Calu3 (cell line): ENCODE measurements at regions of chr11 and their contacts with region 1.

Region 1: GRCh38 chr11:35404388-35404775 is 15.0 kb downstream of the SLC1A2 start:
- DNase-seq: peak; percentile 74
- H3K4me3 Mint-ChIP-seq: peak overlapping the region; percentile 48
- H3K27ac Mint-ChIP-seq: no peak overlapping the region
- H3K4me1 Mint-ChIP-seq: peaks cover 8% of the 10 kb centered on the region
- H3K27me3 Mint-ChIP-seq: peaks cover 4% of the 10 kb centered on the region
- CTCF ChIP-seq: peak; percentile 59

Region 2: GRCh38 chr11:35082321-35083182 is 321.8 kb before region 1 on chr11:
- CTCF ChIA-PET with region 1: no interaction called
- intact Hi-C with region 1: loop called (anchors 10 kb)
- DNase-seq: peak; percentile 58
- H3K4me3 Mint-ChIP-seq: peak overlapping the region; percentile 30
- H3K27ac Mint-ChIP-seq: peak overlapping the region; percentile 47
- H3K4me1 Mint-ChIP-seq: peaks cover 34% of the 10 kb centered on the region
- H3K27me3 Mint-ChIP-seq: no peaks in the 10 kb centered on the region
- CTCF ChIP-seq: no peak

Region 3: DNA sequence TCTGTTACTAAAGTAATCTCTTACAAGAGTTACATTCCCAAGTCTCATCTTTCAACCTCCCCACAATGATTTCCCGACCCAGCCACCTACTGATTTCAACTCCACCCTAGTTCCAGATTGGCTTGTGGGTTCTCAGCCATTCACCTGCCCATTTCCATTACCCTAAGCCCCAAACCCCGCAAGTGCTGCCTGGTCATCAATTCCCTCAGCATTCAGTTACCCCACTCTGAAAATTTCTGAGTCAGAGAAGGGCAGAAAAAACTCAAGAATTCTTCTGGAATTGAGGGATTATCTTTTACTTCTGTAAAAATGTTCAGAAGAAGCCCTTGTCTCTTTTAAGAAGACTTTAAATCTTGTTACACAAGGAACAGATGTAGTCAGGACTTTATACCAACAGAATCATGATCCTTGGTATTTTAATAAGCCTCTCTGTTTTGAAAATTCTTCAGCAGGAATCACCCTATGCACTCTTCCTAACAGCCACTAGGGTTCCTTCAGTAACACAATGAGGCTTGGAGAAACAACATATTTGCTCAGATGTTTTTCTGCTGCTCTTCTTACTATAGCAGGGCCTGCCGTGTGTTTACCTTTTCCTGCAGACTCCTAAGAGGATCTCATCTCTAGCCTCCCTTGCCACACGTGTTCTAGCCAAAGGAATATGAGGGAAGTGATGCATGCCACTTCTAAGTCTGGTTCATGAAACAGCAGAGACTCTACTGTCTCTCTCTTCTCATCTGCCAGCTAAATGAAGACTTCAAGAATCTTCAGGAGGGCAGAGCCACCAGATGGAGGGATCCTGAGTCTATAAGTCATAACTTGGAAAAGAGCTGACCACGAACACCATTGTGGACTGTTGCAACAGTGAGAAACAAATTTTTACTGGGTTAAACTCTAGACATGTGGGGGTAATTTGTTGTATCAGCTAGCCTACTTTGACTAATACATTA is 150.4 kb after region 1 on chr11:
- CTCF ChIA-PET with region 1: no interaction called
- intact Hi-C with region 1: no loop called
- DNase-seq: no peak
- H3K4me3 Mint-ChIP-seq: no peak overlapping the region
- H3K27ac Mint-ChIP-seq: no peak overlapping the region
- H3K4me1 Mint-ChIP-seq: no peaks in the 10 kb centered on the region
- H3K27me3 Mint-ChIP-seq: peaks cover 82% of the 10 kb centered on the region
- CTCF ChIP-seq: no peak